Sigmoid colon (tissue), 7 donors: ENCODE measurements at regions of chr3 and their contacts with region 1.

Region 1: GRCh38 chr3:178385280-178385952 is 150.8 kb upstream of the KCNMB2 start:
- DNase-seq: no peak
- H3K4me3 ChIP-seq: no peak overlapping the region
- H3K27ac ChIP-seq: peak overlapping the region; percentile 51 to 72 (median 71)
- H3K4me1 ChIP-seq: peaks cover 0 to 45% (median 34%) of the 10 kb centered on the region in 4 donors
- H3K27me3 ChIP-seq: no peaks in the 10 kb centered on the region
- CTCF ChIP-seq: peak; percentile 82 to 92 (median 86)
- EP300 ChIP-seq: no peak
- POLR2A ChIP-seq: no peak

Region 2: GRCh38 chr3:176514297-176514696 is 1871.1 kb before region 1 on chr3:
- intact Hi-C with region 1: loop called (anchors 10 kb)
- DNase-seq: no peak
- H3K4me3 ChIP-seq: no peak overlapping the region
- H3K27ac ChIP-seq: no peak overlapping the region
- H3K4me1 ChIP-seq: no peaks in the 10 kb centered on the region
- H3K27me3 ChIP-seq: no peaks in the 10 kb centered on the region
- CTCF ChIP-seq: peak; percentile 58 to 78 (median 72)
- EP300 ChIP-seq: no peak
- POLR2A ChIP-seq: no peak

Region 3: DNA sequence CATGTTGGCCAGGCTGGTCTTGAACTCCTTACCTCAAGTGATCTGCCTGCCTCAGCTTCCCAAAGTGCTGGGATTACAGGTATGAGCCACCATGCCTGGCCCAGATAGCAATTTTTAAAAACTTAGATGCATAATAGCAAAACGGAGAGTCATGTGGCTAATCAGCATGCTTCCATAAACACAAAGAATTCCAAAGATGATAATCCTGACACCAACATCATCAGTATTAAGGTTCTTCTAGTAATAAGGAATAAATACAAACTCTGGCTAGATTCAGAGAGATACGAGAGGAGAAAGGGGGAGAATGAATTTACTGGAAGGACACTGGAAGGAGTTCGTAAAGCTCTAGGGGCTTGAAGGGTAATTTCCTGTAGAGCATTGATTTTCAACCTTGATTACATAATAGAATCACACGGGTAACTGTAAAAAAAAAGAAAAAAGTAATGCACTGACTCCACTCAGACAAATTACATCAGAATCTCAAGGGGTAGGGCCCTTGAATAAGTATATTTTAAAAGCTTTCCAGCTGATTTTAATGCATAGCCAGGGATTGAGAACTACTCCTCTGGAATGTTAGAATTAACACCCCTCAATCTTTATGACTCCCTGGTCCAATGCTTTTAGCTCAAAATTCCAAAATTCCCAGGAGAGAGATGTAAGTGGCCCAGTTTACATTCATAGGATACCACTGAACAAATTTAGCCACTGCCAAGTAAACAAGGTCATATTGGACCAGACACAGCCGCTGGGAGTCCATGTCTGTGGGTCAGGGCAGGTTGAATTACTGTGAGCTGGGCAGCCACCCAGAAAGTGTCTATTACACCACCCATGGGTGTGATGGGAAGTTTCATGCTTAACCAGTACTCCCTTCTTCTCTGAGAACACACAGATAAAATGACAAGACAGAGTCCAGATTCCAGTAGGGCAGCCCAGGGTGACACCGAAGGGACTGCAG is 1432.0 kb before region 1 on chr3:
- intact Hi-C with region 1: loop called (anchors 5 kb)
- DNase-seq: peak; percentile 86
- H3K4me3 ChIP-seq: no peak overlapping the region
- H3K27ac ChIP-seq: peak overlapping the region in 3 of 4 donors; percentile 48 to 60 (median 54)
- H3K4me1 ChIP-seq: peaks cover 0 to 20% (median 16%) of the 10 kb centered on the region in 4 donors
- H3K27me3 ChIP-seq: no peaks in the 10 kb centered on the region
- CTCF ChIP-seq: no peak
- EP300 ChIP-seq: peak in 2 of 4 donors; percentile 34 to 48
- POLR2A ChIP-seq: no peak

Region 4: DNA sequence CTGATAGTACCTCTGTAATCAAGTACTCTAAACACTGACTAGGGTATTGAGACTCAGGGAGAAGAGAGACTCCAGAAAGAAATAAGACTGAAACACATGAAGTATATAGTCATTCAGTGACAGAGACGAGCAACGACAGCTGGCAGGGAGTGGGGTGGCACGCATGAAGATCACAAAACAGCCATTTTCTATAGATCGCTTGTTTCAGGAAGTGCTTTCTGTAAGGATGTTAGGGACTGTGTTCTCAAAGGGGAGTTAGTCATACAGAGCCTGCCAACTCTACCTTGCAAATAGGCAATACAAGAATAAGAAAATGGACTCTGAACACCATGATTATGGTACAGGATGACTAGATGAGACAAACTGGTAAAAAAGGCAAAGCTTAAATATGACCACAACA is 1327.6 kb before region 1 on chr3:
- intact Hi-C with region 1: loop called (anchors 5 kb)
- DNase-seq: no peak
- H3K4me3 ChIP-seq: no peak overlapping the region
- H3K27ac ChIP-seq: no peak overlapping the region
- H3K4me1 ChIP-seq: peaks cover 0 to 49% (median 30%) of the 10 kb centered on the region in 4 donors
- H3K27me3 ChIP-seq: no peaks in the 10 kb centered on the region
- CTCF ChIP-seq: no peak
- EP300 ChIP-seq: no peak
- POLR2A ChIP-seq: no peak

Region 5: GRCh38 chr3:177431525-177432176 is 953.8 kb before region 1 on chr3:
- intact Hi-C with region 1: loop called (anchors 10 kb)
- DNase-seq: no peak
- H3K4me3 ChIP-seq: no peak overlapping the region
- H3K27ac ChIP-seq: no peak overlapping the region
- H3K4me1 ChIP-seq: no peaks in the 10 kb centered on the region
- H3K27me3 ChIP-seq: no peaks in the 10 kb centered on the region
- CTCF ChIP-seq: no peak
- EP300 ChIP-seq: no peak
- POLR2A ChIP-seq: no peak

Region 6: GRCh38 chr3:178823591-178824246 is 438.3 kb after region 1 on chr3:
- intact Hi-C with region 1: no loop called
- DNase-seq: no peak
- H3K4me3 ChIP-seq: no peak overlapping the region
- H3K27ac ChIP-seq: peak overlapping the region; percentile 3 to 56 (median 28)
- H3K4me1 ChIP-seq: peaks cover 0 to 14% (median 8%) of the 10 kb centered on the region in 4 donors
- H3K27me3 ChIP-seq: no peaks in the 10 kb centered on the region
- CTCF ChIP-seq: no peak
- EP300 ChIP-seq: no peak
- POLR2A ChIP-seq: no peak